Activated CD4-positive, alpha-beta T cell treated with anti-CD3 and anti-CD28 coated beads for 36 hours (primary cell): ENCODE measurements at regions of chr6 and their contacts with region 1.

Region 1: GRCh38 chr6:152338335-152339125 is 298.6 kb downstream of the SYNE1 start:
- DNase-seq: peak; percentile 70
- ATAC-seq: peak; percentile 69
- H3K4me3 Mint-ChIP-seq: no peak overlapping the region
- H3K27ac Mint-ChIP-seq: no peak overlapping the region
- H3K4me1 Mint-ChIP-seq: peaks cover 2% of the 10 kb centered on the region
- H3K27me3 Mint-ChIP-seq: no peaks in the 10 kb centered on the region

Region 2: GRCh38 chr6:152301764-152302568 is 36.6 kb before region 1 on chr6:
- CTCF ChIA-PET with region 1: interaction called, 29 read pairs
- POLR2A ChIA-PET with region 1: no interaction called
- intact Hi-C with region 1: loop called (anchors 1 kb)
- DNase-seq: peak; percentile 95
- ATAC-seq: peak; percentile 92
- H3K4me3 Mint-ChIP-seq: peak overlapping the region; percentile 92
- H3K27ac Mint-ChIP-seq: peak overlapping the region; percentile 99
- H3K4me1 Mint-ChIP-seq: peaks cover 31% of the 10 kb centered on the region
- H3K27me3 Mint-ChIP-seq: no peaks in the 10 kb centered on the region

Region 3: DNA sequence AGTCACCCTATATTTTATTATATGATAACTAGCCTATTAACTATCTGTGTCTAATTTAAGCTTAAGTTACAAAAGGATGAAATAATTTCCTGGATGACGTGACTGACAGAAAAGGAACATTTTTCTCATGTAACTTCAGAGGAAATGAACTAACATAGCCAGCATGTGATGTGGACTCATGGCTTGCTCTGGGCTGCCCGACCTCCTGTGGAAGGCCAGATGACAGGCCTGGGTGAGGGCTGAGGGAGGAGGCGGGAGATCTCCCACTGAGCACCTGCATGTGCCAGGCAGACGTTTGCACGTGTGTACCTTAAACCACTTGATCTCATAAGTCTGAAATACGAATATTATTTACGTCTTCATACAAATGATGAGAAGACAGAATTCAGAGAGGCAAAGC is 22.5 kb before region 1 on chr6:
- CTCF ChIA-PET with region 1: interaction called, 12 read pairs
- POLR2A ChIA-PET with region 1: no interaction called
- intact Hi-C with region 1: no loop called
- DNase-seq: no peak
- ATAC-seq: no peak
- H3K4me3 Mint-ChIP-seq: no peak overlapping the region
- H3K27ac Mint-ChIP-seq: no peak overlapping the region
- H3K4me1 Mint-ChIP-seq: peaks cover under 1% of the 10 kb centered on the region
- H3K27me3 Mint-ChIP-seq: no peaks in the 10 kb centered on the region

Region 4: DNA sequence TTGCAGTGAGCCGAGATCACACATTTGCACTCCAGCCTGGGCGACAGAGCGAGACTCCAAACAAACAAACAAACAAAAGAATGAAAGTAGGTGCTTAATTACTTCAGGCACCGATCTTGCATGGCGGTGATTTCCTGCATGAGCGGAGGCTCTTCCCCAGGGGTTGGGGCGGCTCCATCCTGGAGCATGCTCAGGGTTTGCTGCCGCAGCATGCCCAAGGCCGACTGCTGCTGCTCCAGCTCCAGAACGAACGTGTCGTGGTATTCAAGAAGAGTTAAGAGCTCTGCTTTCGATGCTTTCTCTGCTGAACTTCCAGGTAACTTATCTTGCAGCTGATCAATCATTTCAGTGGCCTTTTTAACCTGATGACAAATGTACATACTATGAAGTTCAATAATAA is 15.2 kb before region 1 on chr6:
- CTCF ChIA-PET with region 1: interaction called, 10 read pairs
- POLR2A ChIA-PET with region 1: no interaction called
- intact Hi-C with region 1: no loop called
- DNase-seq: no peak
- ATAC-seq: no peak
- H3K4me3 Mint-ChIP-seq: no peak overlapping the region
- H3K27ac Mint-ChIP-seq: no peak overlapping the region
- H3K4me1 Mint-ChIP-seq: no peaks in the 10 kb centered on the region
- H3K27me3 Mint-ChIP-seq: no peaks in the 10 kb centered on the region

Region 5: GRCh38 chr6:152351110-152351509 is 12.6 kb after region 1 on chr6:
- CTCF ChIA-PET with region 1: interaction called, 12 read pairs
- POLR2A ChIA-PET with region 1: no interaction called
- intact Hi-C with region 1: no loop called
- DNase-seq: no peak
- ATAC-seq: no peak
- H3K4me3 Mint-ChIP-seq: no peak overlapping the region
- H3K27ac Mint-ChIP-seq: no peak overlapping the region
- H3K4me1 Mint-ChIP-seq: no peaks in the 10 kb centered on the region
- H3K27me3 Mint-ChIP-seq: peaks cover 2% of the 10 kb centered on the region

Region 6: GRCh38 chr6:152380993-152381898 is 42.7 kb after region 1 on chr6:
- CTCF ChIA-PET with region 1: no interaction called
- POLR2A ChIA-PET with region 1: no interaction called
- intact Hi-C with region 1: no loop called
- DNase-seq: no peak
- ATAC-seq: no peak
- H3K4me3 Mint-ChIP-seq: no peak overlapping the region
- H3K27ac Mint-ChIP-seq: no peak overlapping the region
- H3K4me1 Mint-ChIP-seq: no peaks in the 10 kb centered on the region
- H3K27me3 Mint-ChIP-seq: peaks cover 12% of the 10 kb centered on the region